ENCODE measurements at regions of chr12 and their contacts with region 1.

Region 1: GRCh38 chr12:22631863-22632463 is 7.0 kb downstream of the ETNK1 start:
- DNase-seq: no peak
- ATAC-seq: no peak

Region 2: DNA sequence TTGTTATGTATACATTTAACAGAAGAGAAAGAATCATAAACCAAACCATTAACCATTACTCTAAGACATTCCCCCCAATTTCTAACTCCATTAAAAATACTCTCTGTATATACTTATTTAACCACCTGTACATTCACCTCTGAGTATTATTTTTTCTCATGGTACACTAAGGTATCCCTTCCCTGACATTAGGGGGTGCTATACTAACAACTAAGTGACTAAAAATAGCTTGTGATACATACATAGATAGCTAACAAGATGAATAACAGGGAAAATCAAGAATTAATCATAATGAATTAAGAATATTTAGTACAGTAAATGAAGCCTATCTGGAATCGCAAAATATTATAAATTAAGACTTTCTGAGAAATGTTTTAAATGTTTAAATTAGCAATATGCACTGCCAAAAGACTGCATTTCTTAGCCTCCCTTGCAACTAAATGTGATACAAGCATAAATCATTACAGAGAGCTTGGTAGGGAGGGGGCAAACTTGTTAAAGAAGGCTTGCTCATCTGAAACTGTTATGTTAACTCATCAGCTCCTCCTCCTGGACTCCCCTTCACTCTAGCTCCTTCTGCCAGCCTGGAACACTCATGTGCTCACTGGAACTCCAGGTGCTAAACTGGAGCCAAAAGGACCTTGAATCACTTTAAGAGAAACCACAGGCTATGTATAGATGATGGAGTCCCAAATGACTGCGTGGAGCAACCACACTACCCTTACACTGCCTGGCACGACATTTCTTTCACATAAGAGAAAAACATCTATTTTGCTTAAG is 102.5 kb before region 1 on chr12:
- intact Hi-C with region 1: loop called in 1 of 2 experiments (anchors 10 kb)
- DNase-seq: no peak
- ATAC-seq: peak in 1 of 2 donors; percentile 59

Region 3: GRCh38 chr12:22541496-22542155 is 90.3 kb before region 1 on chr12:
- intact Hi-C with region 1: no loop called
- DNase-seq: no peak
- ATAC-seq: no peak

Region 4: DNA sequence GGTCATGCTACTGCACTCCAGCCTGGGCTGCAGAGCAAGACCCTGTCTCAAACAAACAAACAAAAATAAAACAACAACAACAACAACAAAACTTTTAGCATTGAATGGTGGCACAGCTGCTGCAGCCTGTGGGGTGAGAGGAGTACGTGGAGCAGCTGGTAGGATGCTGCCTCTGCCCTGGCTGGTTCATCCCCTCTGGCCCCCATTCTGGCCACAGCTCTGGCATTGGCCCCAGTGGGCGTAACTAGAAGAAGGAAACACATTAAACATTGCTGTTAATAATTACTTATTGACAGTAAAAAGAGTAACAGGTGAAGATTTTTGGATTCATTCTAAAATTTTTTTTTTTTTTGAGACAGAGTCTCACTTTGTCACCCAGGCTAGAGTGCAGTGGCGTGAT is 58.8 kb before region 1 on chr12:
- intact Hi-C with region 1: no loop called
- DNase-seq: no peak
- ATAC-seq: no peak